A673 (cell line): ENCODE measurements at regions of chr5 and their contacts with region 1.

Region 1: GRCh38 chr5:40688127-40688761 is 8.5 kb downstream of the PTGER4 start:
- DNase-seq: peak; percentile 88
- H3K4me3 ChIP-seq: no peak overlapping the region
- H3K27ac ChIP-seq: no peak overlapping the region
- H3K4me1 ChIP-seq: peaks cover 4% of the 10 kb centered on the region
- H3K27me3 ChIP-seq: no peaks in the 10 kb centered on the region
- CTCF ChIP-seq: peak; percentile 87

Region 2: GRCh38 chr5:39714036-39714698 is 974.1 kb before region 1 on chr5:
- CTCF ChIA-PET with region 1: no interaction called
- POLR2A ChIA-PET with region 1: no interaction called
- intact Hi-C with region 1: loop called (anchors 1 kb)
- DNase-seq: peak; percentile 60
- H3K4me3 ChIP-seq: no peak overlapping the region
- H3K27ac ChIP-seq: no peak overlapping the region
- H3K4me1 ChIP-seq: peaks cover 3% of the 10 kb centered on the region
- H3K27me3 ChIP-seq: no peaks in the 10 kb centered on the region
- CTCF ChIP-seq: peak; percentile 66

Region 3: DNA sequence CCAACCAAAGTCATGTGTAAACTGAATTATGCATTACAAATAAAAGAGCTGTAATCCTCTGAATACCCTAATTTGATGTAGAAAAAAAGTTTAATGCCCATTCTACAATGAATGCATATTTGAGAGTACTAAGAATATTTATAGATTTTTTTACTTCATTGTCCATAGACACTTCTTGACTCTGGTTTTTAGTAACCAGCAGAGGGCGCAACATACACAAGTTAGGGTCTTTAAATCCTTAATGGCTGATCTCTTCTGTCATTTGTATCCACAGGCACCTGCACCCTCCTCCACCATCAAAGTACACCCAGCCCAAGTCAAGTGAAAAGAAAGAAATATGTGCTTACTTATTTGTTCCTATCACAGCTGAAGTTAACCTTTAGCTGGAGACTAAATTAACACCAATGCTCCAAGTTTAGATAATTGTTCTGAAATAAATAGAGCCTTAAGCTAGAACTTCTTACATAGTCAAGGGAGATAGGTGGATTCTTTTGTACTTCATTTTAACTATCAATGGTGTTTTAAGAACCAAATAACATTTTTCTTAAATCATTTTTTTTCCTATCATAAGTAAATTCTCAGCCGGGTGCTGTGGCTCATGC is 739.3 kb before region 1 on chr5:
- CTCF ChIA-PET with region 1: no interaction called
- POLR2A ChIA-PET with region 1: no interaction called
- intact Hi-C with region 1: loop called (anchors 1 kb)
- DNase-seq: peak; percentile 83
- H3K4me3 ChIP-seq: no peak overlapping the region
- H3K27ac ChIP-seq: no peak overlapping the region
- H3K4me1 ChIP-seq: no peaks in the 10 kb centered on the region
- H3K27me3 ChIP-seq: no peaks in the 10 kb centered on the region
- CTCF ChIP-seq: peak; percentile 82

Region 4: DNA sequence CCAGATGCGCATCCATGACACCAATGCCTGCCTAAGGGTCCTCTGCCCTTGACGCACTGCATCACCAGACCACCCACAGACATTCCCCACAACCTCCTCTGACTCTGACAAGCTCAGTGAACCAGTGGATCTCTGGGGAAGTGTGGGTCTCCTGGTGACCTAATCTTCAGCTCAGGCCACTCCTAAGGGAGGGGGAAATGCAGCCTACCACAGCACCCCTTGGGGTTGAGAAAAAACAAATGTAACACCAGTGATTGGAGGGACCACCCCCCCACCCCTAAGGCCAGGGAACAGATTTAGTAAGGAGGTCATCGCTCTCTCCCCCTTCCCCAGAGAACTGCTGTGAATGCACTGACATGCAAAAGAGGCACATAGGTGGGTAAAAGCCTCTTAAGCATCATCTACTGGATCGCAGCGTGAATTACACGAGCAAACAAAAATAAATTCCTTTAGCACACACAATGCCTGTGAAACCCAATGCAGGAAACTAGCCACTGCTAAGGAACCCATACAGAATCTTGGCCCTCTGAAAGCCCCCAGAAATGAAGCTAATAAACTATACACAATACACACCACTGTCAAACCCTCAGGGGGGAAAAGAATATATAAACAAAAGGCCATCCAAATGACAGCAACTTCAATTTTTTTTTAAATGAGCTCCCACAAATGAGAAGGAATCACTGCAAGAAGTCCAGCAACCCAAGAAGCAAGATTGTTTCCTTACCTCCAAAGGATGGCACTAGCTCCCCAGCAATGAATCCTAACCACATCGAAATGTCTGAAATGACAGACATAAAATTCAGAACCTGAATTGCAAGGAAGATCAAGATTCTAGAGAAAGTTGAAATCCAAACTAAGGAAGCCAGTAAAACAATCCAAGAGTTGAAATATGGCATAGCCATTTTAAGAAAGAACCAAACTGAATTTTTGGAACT is 522.2 kb before region 1 on chr5:
- CTCF ChIA-PET with region 1: no interaction called
- POLR2A ChIA-PET with region 1: no interaction called
- intact Hi-C with region 1: loop called (anchors 10 kb)
- DNase-seq: peak; percentile 32
- H3K4me3 ChIP-seq: no peak overlapping the region
- H3K27ac ChIP-seq: no peak overlapping the region
- H3K4me1 ChIP-seq: peaks cover 11% of the 10 kb centered on the region
- H3K27me3 ChIP-seq: no peaks in the 10 kb centered on the region
- CTCF ChIP-seq: peak; percentile 39

Region 5: DNA sequence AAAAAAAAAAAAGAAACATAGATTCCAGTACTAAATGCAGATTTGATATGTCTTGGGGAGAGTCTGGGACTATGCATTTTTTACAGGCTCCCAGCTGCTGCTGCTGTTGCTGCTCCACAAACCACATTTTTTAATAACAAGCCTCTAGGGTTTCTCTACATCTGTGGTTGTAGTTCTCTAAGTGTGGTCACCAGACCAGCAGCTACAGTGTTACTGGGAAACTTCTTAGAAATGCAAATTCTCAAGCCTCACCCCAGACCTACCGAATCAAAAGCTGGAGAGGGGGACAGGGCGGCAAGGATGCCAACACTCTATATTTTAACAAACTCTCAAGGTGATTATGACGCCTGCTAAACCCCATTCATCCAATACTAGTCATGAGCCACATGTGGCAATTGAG is 302.0 kb before region 1 on chr5:
- CTCF ChIA-PET with region 1: no interaction called
- POLR2A ChIA-PET with region 1: no interaction called
- intact Hi-C with region 1: loop called (anchors 10 kb)
- DNase-seq: no peak
- H3K4me3 ChIP-seq: no peak overlapping the region
- H3K27ac ChIP-seq: no peak overlapping the region
- H3K4me1 ChIP-seq: no peaks in the 10 kb centered on the region
- H3K27me3 ChIP-seq: no peaks in the 10 kb centered on the region
- CTCF ChIP-seq: no peak